ENCODE measurements at regions of chr2 and their contacts with region 1.

Region 1: DNA sequence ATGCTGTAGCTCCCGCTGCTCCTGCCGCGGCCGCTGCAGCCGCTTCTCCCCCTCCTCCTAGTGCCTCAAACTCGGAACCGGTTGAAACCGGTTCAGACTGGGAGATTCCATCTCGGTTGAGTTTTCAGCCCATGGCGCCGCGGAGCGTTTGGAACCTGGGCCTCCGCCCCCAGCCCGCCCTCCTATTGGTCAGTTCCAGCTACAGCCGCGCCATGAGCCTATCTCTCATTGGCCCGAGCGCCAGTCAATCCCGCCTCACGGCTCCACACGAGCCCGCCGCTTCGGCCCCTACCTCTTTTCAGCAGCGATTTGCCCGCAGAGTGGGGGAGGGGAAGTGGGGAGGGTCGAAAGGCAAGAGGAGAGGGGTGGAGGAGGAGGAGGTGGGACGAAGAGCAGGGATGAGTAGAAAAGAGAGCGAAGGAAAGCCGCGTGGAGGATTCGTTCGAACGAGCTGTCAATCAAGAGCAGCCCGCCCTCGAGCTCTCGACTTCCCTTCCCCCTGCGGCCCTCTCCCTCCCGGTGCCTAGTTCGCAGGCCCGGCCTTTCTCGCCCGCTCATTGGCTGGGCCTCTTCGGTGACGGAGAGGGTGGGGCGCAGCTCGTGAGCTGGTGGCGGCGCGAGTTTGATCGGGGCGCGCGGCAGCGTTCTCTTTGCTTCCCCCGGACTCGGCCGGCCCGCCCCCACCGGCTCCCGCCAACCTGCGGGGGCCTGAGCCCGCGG is at the start of gene XPO1:
- DNase-seq: peak; percentile 99
- H3K4me3 ChIP-seq: peak within 1 kb of the TSS; percentile 67 to 91 (median 87)
- H3K27ac ChIP-seq: peak within 1 kb of the TSS; percentile 92 to 100 (median 97)
- H3K4me1 ChIP-seq: peaks cover 0 to 38% (median 22%) of the 10 kb centered on the region in 3 donors
- H3K27me3 ChIP-seq: no peaks in the 10 kb centered on the region
- CTCF ChIP-seq: peak in 1 of 6 experiments; percentile 28
- POLR2A ChIP-seq: peak in 3 of 4 donors; percentile 88 to 97 (median 96)
- total RNA-seq, gene XPO1: 46.5 to 138 (median 104) TPM

Region 2: GRCh38 chr2:61470965-61471904 is 67.1 kb before region 1 on chr2 and contains the start of gene USP34:
- intact Hi-C with region 1: loop called (anchors 5 kb)
- DNase-seq: peak; percentile 76
- H3K4me3 ChIP-seq: peak within 1 kb of the TSS; percentile 66 to 98 (median 89)
- H3K27ac ChIP-seq: peak within 1 kb of the TSS; percentile 94 to 100 (median 98)
- H3K4me1 ChIP-seq: peaks cover 13 to 42% (median 16%) of the 10 kb centered on the region in 3 donors
- H3K27me3 ChIP-seq: no peaks in the 10 kb centered on the region
- CTCF ChIP-seq: peak in 2 of 6 experiments; percentile 2 to 33
- POLR2A ChIP-seq: peak in 3 of 4 donors; percentile 12 to 87 (median 78)
- total RNA-seq, gene USP34: 49.5 to 129 (median 84.9) TPM

Region 3: DNA sequence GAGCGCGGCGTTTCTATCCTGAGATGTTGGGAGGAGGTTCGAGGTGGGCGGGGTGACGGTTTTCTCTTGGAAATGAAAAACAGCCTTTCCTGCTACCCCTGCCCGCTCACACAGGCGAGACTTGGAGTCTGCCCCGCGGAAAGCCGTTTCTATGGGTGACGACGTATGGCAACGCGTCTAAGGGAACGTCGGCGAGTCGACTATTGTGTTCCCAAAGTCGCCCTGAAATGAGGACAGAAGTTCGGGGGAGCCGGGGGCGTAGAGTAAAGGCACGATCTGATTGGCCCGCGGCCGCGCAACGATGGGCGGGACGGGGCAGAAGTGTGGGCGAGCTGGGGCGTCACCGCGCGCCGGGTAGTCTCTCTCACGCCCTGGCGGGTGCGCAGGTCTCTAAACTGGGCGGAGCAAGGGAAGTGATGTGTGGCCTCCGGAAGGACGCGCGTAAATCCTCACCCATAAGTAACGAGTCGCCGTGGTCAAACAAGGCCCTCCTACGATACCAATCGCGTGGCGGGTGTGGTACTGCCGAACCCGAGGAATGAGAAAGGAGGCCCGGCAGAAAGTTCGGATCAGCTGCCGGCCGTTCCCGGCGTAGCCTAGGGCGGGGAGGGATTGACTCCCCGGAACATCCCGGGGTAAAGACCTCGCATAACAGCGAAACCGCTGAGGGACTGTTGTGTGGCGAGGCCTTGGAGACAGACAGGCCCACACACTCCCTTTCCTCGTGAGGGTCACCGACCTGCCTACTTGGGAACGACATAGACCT is 225.9 kb after region 1 on chr2:
- intact Hi-C with region 1: loop called (anchors 5 kb)
- DNase-seq: peak; percentile 88
- H3K4me3 ChIP-seq: peak overlapping the region; percentile 57 to 92 (median 70)
- H3K27ac ChIP-seq: peak overlapping the region; percentile 96 to 99 (median 98)
- H3K4me1 ChIP-seq: peaks cover 0 to 14% (median 0%) of the 10 kb centered on the region in 3 donors
- H3K27me3 ChIP-seq: no peaks in the 10 kb centered on the region
- CTCF ChIP-seq: peak in 1 of 6 experiments; percentile 5
- POLR2A ChIP-seq: peak in 3 of 4 donors; percentile 76 to 86 (median 86)

Measured in esophagus squamous epithelium (tissue), 5 donors.